CD8-positive, alpha-beta T cell (primary cell): ENCODE measurements at regions of chr21 and their contacts with region 1.

Region 1: GRCh38 chr21:42964546-42965225 is 9.7 kb upstream of the PKNOX1 start:
- DNase-seq: no peak
- ATAC-seq: no peak
- H3K4me3 ChIP-seq: no peak overlapping the region
- H3K4me3 Mint-ChIP-seq: no peak overlapping the region
- H3K27ac ChIP-seq: no peak overlapping the region
- H3K27ac Mint-ChIP-seq: no peak overlapping the region
- H3K4me1 ChIP-seq: no peaks in the 10 kb centered on the region
- H3K4me1 Mint-ChIP-seq: no peaks in the 10 kb centered on the region
- H3K27me3 ChIP-seq: no peaks in the 10 kb centered on the region
- H3K27me3 Mint-ChIP-seq: no peaks in the 10 kb centered on the region
- CTCF ChIP-seq: no peak

Region 2: DNA sequence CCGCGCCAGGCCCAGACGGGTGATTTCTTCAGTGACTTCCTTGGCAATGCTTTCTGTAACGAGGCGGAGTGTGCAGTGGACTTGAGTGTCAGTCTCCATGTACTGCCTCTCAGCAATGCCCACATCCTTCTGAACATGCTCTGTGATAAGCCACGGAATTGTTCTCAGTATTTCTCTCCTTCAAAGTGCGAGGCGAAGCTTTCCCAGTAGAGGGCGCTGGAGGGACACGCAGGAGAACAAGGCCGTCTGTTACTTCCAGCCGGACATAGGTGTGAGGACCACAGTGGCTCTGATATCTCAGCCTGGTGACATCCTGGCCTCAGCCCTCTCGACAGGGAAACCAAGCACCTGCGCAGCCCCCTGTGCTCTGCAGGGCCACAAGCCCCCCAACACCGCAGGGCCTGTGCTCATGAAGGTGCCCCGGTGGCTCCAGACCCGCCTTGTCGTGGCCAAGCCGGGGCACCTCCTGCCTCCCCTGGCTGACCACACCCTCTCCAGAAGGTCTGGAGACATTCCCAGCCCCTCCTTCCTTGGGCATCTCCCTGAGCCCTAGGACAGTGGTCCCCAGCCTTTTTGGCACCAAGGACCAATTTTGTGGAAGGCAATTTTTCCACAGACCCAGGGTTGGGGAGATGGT is 1842.8 kb before region 1 on chr21:
- CTCF ChIA-PET with region 1: no interaction called
- POLR2A ChIA-PET with region 1: no interaction called
- intact Hi-C with region 1: no loop called
- DNase-seq: peak in 6 of 9 experiments; percentile 13 to 51 (median 33)
- ATAC-seq: no peak
- H3K4me3 ChIP-seq: no peak overlapping the region
- H3K4me3 Mint-ChIP-seq: no peak overlapping the region
- H3K27ac ChIP-seq: no peak overlapping the region
- H3K27ac Mint-ChIP-seq: no peak overlapping the region
- H3K4me1 ChIP-seq: no peaks in the 10 kb centered on the region
- H3K4me1 Mint-ChIP-seq: no peaks in the 10 kb centered on the region
- H3K27me3 ChIP-seq: no peaks in the 10 kb centered on the region
- H3K27me3 Mint-ChIP-seq: peaks cover 8% of the 10 kb centered on the region
- CTCF ChIP-seq: peak; percentile 36

Region 3: DNA sequence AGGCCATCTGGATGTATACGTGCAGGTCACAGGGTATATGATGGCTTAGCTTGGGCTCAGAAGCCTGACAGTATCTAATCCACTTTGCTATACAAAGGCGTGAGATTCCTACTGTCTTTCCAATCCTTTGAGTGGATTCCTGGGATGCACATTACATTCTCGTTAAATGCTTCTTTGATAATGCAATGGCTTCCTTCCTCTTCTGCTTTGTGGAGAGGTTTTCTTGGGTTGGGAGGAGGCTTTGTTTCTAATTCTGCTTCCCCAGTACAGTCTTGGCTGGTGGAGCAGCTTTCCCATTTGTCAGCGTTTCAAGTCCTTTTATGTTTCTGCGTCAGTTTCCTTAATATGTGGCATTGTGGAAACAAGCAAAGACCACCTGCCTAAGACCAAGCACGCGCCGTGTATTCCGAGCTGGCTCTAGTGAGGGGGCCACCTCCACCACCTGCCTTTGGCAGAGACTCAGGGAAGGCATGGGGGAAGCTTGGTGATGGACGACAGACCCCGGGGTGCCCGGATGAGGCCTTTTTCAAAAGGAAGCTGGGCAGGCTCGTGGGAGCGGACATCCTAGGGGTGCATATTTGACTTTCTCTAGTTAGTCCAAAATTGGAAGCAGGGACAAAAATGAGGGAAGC is 158.1 kb before region 1 on chr21:
- CTCF ChIA-PET with region 1: no interaction called
- POLR2A ChIA-PET with region 1: no interaction called
- intact Hi-C with region 1: no loop called
- DNase-seq: no peak
- ATAC-seq: no peak
- H3K4me3 ChIP-seq: no peak overlapping the region
- H3K4me3 Mint-ChIP-seq: no peak overlapping the region
- H3K27ac ChIP-seq: no peak overlapping the region
- H3K27ac Mint-ChIP-seq: no peak overlapping the region
- H3K4me1 ChIP-seq: no peaks in the 10 kb centered on the region
- H3K4me1 Mint-ChIP-seq: no peaks in the 10 kb centered on the region
- H3K27me3 ChIP-seq: no peaks in the 10 kb centered on the region
- H3K27me3 Mint-ChIP-seq: no peaks in the 10 kb centered on the region
- CTCF ChIP-seq: no peak

Region 4: GRCh38 chr21:42850866-42851391 is 113.8 kb before region 1 on chr21:
- CTCF ChIA-PET with region 1: no interaction called
- POLR2A ChIA-PET with region 1: no interaction called
- intact Hi-C with region 1: no loop called
- DNase-seq: peak in 4 of 9 experiments; percentile 26 to 48 (median 38)
- ATAC-seq: peak; percentile 61
- H3K4me3 ChIP-seq: no peak overlapping the region
- H3K4me3 Mint-ChIP-seq: no peak overlapping the region
- H3K27ac ChIP-seq: no peak overlapping the region
- H3K27ac Mint-ChIP-seq: no peak overlapping the region
- H3K4me1 ChIP-seq: no peaks in the 10 kb centered on the region
- H3K4me1 Mint-ChIP-seq: no peaks in the 10 kb centered on the region
- H3K27me3 ChIP-seq: no peaks in the 10 kb centered on the region
- H3K27me3 Mint-ChIP-seq: no peaks in the 10 kb centered on the region
- CTCF ChIP-seq: peak; percentile 23

Region 5: DNA sequence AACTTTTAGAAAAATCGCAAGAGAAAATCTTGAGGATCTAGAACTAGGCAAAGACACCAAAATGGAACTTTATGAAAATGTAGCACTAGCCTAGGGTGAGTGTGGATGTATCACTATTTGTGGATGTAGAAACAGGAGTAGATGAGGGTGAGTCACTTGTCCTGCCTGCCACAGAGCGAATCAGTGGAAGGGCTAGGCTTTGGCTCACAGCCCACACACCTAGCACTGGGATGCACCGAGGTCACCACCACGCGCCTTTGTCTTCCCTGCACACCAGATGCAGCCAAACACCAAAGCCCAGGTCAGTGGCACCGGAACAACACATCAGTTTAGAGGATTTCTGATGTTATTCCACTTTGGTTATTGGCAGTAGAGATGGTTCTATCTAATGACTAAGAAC is 47.9 kb after region 1 on chr21:
- CTCF ChIA-PET with region 1: no interaction called
- POLR2A ChIA-PET with region 1: no interaction called
- intact Hi-C with region 1: loop called in 1 of 2 experiments (anchors 10 kb)
- DNase-seq: no peak
- ATAC-seq: no peak
- H3K4me3 ChIP-seq: no peak overlapping the region
- H3K4me3 Mint-ChIP-seq: no peak overlapping the region
- H3K27ac ChIP-seq: no peak overlapping the region
- H3K27ac Mint-ChIP-seq: no peak overlapping the region
- H3K4me1 ChIP-seq: no peaks in the 10 kb centered on the region
- H3K4me1 Mint-ChIP-seq: no peaks in the 10 kb centered on the region
- H3K27me3 ChIP-seq: no peaks in the 10 kb centered on the region
- H3K27me3 Mint-ChIP-seq: no peaks in the 10 kb centered on the region
- CTCF ChIP-seq: no peak